Activated B cell treated with CpG ODN at 0.5 μM for 24 hours (primary cell): ENCODE measurements at regions of chr2 and their contacts with region 1.

Region 1: GRCh38 chr2:85354286-85355072 is at the starts of genes ELMOD3 and RETSAT:
- DNase-seq: peak; percentile 84
- ATAC-seq: peak; percentile 99
- H3K4me3 Mint-ChIP-seq: peak within 1 kb of the TSS; percentile 100
- H3K27ac Mint-ChIP-seq: peak within 1 kb of the TSS; percentile 99
- H3K4me1 Mint-ChIP-seq: peaks cover 48% of the 10 kb centered on the region
- H3K27me3 Mint-ChIP-seq: no peaks in the 10 kb centered on the region
- CTCF ChIP-seq: no peak
- total RNA-seq, gene ELMOD3: 19.2 and 25.4 TPM in 2 replicates
- total RNA-seq, gene RETSAT: 16.9 and 17.1 TPM in 2 replicates

Region 2: DNA sequence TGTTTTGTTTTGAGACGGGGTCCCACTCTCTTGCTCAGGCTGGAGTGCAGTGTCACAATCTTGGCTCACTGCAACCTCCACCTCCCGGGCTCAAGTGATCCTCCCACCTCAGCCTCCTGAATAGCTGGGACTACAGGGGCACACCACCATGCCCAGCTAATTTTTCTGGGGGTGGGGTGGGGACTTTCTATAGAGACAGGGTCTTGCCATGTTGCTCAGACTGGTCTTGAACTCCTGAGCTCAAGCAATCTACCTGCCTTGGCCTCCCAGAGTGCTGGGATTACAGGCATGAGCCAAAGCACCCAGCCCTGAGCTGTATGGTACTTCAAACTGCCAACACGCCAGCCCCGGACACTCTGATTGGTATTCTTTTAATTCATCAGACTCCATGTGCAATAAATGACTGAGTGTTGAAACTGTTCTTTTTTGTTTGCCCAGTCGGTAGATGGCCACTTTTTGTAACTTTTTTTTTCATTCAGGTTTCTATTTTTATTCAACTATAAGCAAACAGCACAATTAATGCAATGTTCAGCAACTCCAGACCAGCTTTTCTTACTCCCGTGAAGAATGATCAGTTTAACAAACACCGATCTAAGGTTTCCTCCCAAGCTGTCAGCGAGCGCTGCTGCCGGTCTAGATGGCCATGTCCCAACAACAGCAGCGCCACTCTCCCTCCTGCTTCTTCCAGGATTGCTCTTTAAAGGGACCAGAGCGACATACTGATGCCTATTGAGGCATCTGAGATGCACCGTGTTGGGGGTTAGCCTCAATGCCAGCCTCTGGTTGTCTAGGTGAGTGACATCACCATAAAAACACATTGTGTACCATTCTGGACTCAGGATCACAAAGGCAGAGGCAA is 14.2 kb before region 1 on chr2:
- CTCF ChIA-PET with region 1: no interaction called
- POLR2A ChIA-PET with region 1: interaction called, 12 read pairs
- intact Hi-C with region 1: no loop called
- DNase-seq: no peak
- ATAC-seq: no peak
- H3K4me3 Mint-ChIP-seq: no peak overlapping the region
- H3K27ac Mint-ChIP-seq: no peak overlapping the region
- H3K4me1 Mint-ChIP-seq: no peaks in the 10 kb centered on the region
- H3K27me3 Mint-ChIP-seq: no peaks in the 10 kb centered on the region
- CTCF ChIP-seq: no peak

Region 3: DNA sequence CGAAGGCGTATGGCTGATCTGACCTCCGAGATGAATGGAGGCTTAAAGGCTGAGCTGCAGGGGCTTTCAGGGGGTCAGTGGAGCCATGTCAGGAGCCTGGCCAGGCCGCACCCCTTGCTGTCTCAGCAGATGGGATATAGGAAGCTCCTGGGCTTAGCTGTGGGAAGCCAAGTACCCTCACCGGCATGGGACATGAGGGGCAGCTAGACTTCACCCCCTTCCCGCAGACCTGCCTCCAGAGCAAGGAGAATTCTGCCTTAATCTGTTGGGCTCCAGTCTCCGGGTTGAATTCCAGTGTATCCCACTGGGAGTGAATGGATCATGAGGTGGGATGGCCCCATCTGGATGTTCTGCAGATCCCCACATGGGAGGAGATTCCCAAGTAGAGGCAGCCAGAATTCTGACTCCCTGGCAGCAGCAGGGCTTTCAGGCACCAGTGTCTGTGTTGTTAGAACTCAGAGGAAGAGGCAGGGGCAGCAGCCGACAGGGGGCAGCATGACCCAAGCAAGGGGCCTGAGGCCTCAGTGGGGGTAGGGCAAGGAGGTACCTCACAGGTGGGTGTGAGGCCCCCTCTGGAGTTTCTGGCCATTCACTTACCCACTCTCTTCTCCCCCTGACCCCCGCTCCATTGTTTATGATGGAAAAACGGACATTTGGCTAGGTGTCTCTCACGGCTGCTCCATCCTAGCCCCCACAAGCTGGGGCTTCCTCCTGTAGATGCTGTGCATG is 36.6 kb after region 1 on chr2:
- CTCF ChIA-PET with region 1: interaction called, 3 read pairs
- POLR2A ChIA-PET with region 1: interaction called, 9 read pairs
- intact Hi-C with region 1: loop called (anchors 1 kb)
- DNase-seq: peak; percentile 69
- ATAC-seq: peak; percentile 22
- H3K4me3 Mint-ChIP-seq: no peak overlapping the region
- H3K27ac Mint-ChIP-seq: peak overlapping the region; percentile 81
- H3K4me1 Mint-ChIP-seq: peaks cover 30% of the 10 kb centered on the region
- H3K27me3 Mint-ChIP-seq: no peaks in the 10 kb centered on the region
- CTCF ChIP-seq: no peak

Region 4: DNA sequence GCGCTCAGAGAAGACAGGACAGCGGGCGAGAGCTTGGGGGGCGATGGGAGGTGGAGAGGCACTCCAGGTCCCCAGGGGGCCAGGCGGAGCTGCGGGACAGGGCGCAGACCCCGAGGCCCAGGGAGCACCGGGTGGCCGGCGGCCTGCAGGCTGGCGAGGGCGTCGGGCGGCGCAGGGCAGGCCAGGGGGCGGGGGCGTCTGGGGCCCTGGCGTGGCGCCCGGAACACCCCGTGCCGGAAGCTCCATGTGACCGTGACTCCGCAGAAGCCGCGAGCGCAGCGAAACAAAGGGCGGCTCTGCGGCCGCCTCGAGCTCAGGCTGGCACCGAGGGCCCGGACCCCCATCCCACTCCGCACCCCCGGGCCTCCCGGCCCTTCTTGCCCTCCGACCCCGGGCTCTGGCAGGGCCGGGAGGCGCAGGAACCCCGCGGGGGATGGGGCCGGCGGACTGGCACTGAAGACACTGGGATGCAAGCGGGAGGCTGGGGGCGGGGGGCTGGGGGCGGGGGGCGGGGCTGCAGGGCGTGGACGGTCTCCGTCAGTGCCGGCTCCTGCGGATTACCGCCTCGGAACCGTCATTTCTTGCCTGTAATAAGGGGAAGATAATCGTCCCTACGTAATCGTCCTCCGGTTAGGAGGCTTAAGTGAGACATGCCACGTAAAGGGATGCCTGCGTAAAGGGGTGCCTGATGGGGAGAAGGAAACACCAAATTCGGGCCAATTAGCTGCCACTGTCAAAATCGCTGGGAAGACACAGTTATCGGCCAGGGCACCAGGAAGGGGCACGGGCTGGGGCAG is 83.2 kb after region 1 on chr2:
- CTCF ChIA-PET with region 1: no interaction called
- POLR2A ChIA-PET with region 1: interaction called, 12 read pairs
- intact Hi-C with region 1: loop called (anchors 1 kb)
- DNase-seq: peak; percentile 80
- ATAC-seq: peak; percentile 86
- H3K4me3 Mint-ChIP-seq: peak overlapping the region; percentile 87
- H3K27ac Mint-ChIP-seq: peak overlapping the region; percentile 95
- H3K4me1 Mint-ChIP-seq: peaks cover 33% of the 10 kb centered on the region
- H3K27me3 Mint-ChIP-seq: no peaks in the 10 kb centered on the region
- CTCF ChIP-seq: no peak

Region 5: GRCh38 chr2:85561317-85561979 is 207.0 kb after region 1 on chr2 and contains the start of gene GGCX:
- CTCF ChIA-PET with region 1: no interaction called
- POLR2A ChIA-PET with region 1: interaction called, 10 read pairs
- intact Hi-C with region 1: loop called (anchors 1 kb)
- DNase-seq: peak; percentile 84
- ATAC-seq: peak; percentile 88
- H3K4me3 Mint-ChIP-seq: peak within 1 kb of the TSS; percentile 98
- H3K27ac Mint-ChIP-seq: peak within 1 kb of the TSS; percentile 98
- H3K4me1 Mint-ChIP-seq: peaks cover 38% of the 10 kb centered on the region
- H3K27me3 Mint-ChIP-seq: no peaks in the 10 kb centered on the region
- CTCF ChIP-seq: no peak
- total RNA-seq, gene GGCX: 30.0 and 30.7 TPM in 2 replicates